Right ventricle myocardium inferior (tissue), 1 donor: ENCODE measurements at regions of chr21 and their contacts with region 1.

Region 1: DNA sequence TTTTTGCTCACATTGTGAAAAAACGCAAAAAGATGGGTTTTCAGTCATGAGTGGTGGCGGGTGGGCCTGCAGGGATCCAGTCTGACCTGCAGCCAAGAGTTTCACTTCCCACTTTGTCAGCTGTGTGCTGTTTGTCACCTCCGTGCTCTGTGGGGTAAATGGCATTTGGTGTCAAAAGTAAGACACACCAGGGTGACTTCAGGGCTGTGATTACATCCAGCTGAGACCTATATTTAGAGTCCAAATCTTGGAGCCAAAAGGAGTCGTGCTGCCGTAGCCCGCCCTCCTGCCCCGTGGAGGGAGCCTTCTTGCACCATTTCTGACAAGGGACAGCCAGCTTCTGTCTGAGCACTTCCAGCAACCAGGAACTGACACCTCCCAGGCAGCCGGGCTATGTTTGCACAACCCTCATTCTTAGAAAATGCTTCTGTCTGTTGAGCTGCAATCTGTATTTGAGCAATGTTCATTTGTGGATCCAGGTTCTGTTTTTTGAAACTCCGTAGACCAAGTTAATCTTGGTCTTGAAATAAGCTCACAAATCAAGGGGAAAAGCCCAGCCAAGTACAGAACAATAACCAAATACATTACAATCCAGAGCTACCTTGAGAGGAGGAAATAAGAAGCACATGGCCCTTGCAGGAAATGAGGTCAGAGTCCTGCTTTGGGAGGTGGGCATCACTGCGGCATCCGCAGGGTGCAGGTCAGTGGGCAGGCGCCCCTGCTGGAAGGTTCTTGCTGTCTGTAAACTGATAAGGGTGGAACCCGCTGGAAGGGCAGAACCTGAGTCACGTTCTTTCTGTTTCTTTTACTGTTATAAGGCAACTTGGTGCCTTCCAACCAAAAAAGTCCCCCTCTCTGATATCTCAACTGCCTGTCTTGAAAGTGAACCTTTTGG is 14.4 kb downstream of the ABCG1 start:
- DNase-seq: peak; percentile 86
- ATAC-seq: peak; percentile 89

Region 2: GRCh38 chr21:42097860-42098454 is 135.4 kb before region 1 on chr21:
- intact Hi-C with region 1: no loop called
- DNase-seq: no peak
- ATAC-seq: peak; percentile 39

Region 3: GRCh38 chr21:42171091-42172053 is 61.9 kb before region 1 on chr21:
- intact Hi-C with region 1: loop called (anchors 5 kb)
- DNase-seq: no peak
- ATAC-seq: no peak

Region 4: GRCh38 chr21:42220138-42220701 is 13.1 kb before region 1 on chr21:
- intact Hi-C with region 1: loop called (anchors 1 kb)
- DNase-seq: no peak
- ATAC-seq: peak; percentile 56

Region 5: GRCh38 chr21:42524349-42525151 is 291.2 kb after region 1 on chr21:
- intact Hi-C with region 1: loop called (anchors 10 kb)
- DNase-seq: peak; percentile 74
- ATAC-seq: peak; percentile 77